ENCODE measurements at regions of chr13 and their contacts with region 1.

Region 1: GRCh38 chr13:30132623-30133553 is 174.5 kb downstream of the KATNAL1 start:
- DNase-seq: peak; percentile 78
- ATAC-seq: peak; percentile 100
- H3K4me3 ChIP-seq: no peak overlapping the region
- H3K27ac ChIP-seq: no peak overlapping the region; the same call in 1 of the 2 replicates
- H3K4me1 ChIP-seq: peaks cover 0 to 7% of the 10 kb centered on the region in 2 experiments; a peak in 2 of 4 replicates
- H3K27me3 ChIP-seq: no peaks in the 10 kb centered on the region
- CTCF ChIP-seq: peak; percentile 85 to 91 (median 88)
- POLR2A ChIP-seq: no peak
- RAD21 ChIP-seq: peak; percentile 94

Region 2: GRCh38 chr13:29771247-29771646 is 361.6 kb before region 1 on chr13:
- CTCF ChIA-PET with region 1: interaction called, 19 read pairs
- POLR2A ChIA-PET with region 1: no interaction called
- RAD21 ChIA-PET with region 1: no interaction called
- intact Hi-C with region 1: no loop called
- DNase-seq: peak; percentile 37
- ATAC-seq: 0 out of 2 replicates have a peak, but pooled peaks have one; percentile 59
- H3K4me3 ChIP-seq: no peak overlapping the region
- H3K27ac ChIP-seq: no peak overlapping the region
- H3K4me1 ChIP-seq: no peaks in the 10 kb centered on the region
- H3K27me3 ChIP-seq: no peaks in the 10 kb centered on the region
- CTCF ChIP-seq: peak; percentile 36 to 63 (median 56); a peak in 4 of 6 replicates
- POLR2A ChIP-seq: no peak
- RAD21 ChIP-seq: peak; percentile 69

Region 3: GRCh38 chr13:30026093-30026492 is 106.8 kb before region 1 on chr13:
- CTCF ChIA-PET with region 1: no interaction called
- POLR2A ChIA-PET with region 1: no interaction called
- RAD21 ChIA-PET with region 1: no interaction called
- intact Hi-C with region 1: no loop called
- DNase-seq: no peak
- ATAC-seq: no peak
- H3K4me3 ChIP-seq: no peak overlapping the region
- H3K27ac ChIP-seq: no peak overlapping the region
- H3K4me1 ChIP-seq: no peaks in the 10 kb centered on the region
- H3K27me3 ChIP-seq: no peaks in the 10 kb centered on the region
- CTCF ChIP-seq: no peak
- POLR2A ChIP-seq: no peak
- RAD21 ChIP-seq: no peak

Region 4: DNA sequence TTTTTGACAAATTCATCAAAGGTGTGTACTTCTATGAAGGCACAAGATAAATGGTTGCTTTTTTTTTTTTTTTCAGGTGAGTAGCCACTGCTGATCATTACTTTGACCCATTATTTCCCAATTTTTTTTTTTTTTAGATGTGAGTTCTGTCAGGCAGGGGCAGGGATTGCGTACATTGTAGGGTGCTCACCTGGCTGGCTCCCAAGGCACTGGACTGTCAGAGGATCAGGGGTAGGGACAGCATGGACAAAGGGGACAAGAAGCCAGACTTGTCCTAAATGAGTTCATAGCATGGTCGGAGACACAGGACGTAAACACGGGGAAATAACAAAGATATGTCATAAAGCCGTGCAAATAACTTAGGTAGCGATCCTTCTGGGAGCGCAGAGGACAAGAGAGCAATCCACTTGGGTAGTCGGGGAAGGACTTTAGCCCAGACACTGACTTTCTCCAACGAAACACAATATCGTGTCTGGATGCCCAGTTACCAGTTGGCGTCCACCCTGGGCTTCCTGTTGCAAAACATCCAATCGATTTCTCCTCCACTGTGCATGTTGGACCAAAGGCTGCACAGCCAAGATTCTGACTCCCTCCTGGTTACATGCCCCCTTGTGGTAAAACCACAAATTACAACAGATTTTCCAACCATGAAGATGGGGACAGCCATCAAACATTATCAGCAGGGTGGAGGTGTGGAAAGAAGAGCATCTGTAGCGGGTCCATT is 201.9 kb after region 1 on chr13:
- CTCF ChIA-PET with region 1: interaction called, 5 read pairs
- POLR2A ChIA-PET with region 1: no interaction called
- RAD21 ChIA-PET with region 1: no interaction called
- intact Hi-C with region 1: loop called (anchors 1 kb)
- DNase-seq: peak; percentile 59
- ATAC-seq: peak; percentile 53
- H3K4me3 ChIP-seq: no peak overlapping the region
- H3K27ac ChIP-seq: no peak overlapping the region
- H3K4me1 ChIP-seq: peaks cover 42 to 74% of the 10 kb centered on the region in 2 experiments
- H3K27me3 ChIP-seq: no peaks in the 10 kb centered on the region
- CTCF ChIP-seq: peak; percentile 24 to 79 (median 67); a peak in 5 of 6 replicates
- POLR2A ChIP-seq: no peak
- RAD21 ChIP-seq: peak; percentile 58

Region 5: GRCh38 chr13:30551189-30551588 is 418.3 kb after region 1 on chr13:
- CTCF ChIA-PET with region 1: no interaction called
- POLR2A ChIA-PET with region 1: no interaction called
- RAD21 ChIA-PET with region 1: interaction called in 1 of 2 experiments, 3 read pairs
- intact Hi-C with region 1: loop called (anchors 2 kb)
- DNase-seq: peak; percentile 26
- ATAC-seq: peak; percentile 85
- H3K4me3 ChIP-seq: no peak overlapping the region
- H3K27ac ChIP-seq: no peak overlapping the region
- H3K4me1 ChIP-seq: no peaks in the 10 kb centered on the region
- H3K27me3 ChIP-seq: no peaks in the 10 kb centered on the region
- CTCF ChIP-seq: peak; percentile 39 to 52 (median 42); a peak in 5 of 6 replicates
- POLR2A ChIP-seq: no peak
- RAD21 ChIP-seq: peak; percentile 71

Region 6: GRCh38 chr13:30673669-30674521 is 541.0 kb after region 1 on chr13:
- CTCF ChIA-PET with region 1: no interaction called
- POLR2A ChIA-PET with region 1: no interaction called
- RAD21 ChIA-PET with region 1: no interaction called
- intact Hi-C with region 1: loop called (anchors 10 kb)
- DNase-seq: peak; percentile 59
- ATAC-seq: peak; percentile 92
- H3K4me3 ChIP-seq: peak overlapping the region; percentile 13 to 44; a peak in 3 of 4 replicates
- H3K27ac ChIP-seq: peak overlapping the region; percentile 1; the same call in 1 of the 2 replicates
- H3K4me1 ChIP-seq: peaks cover 0 to 15% of the 10 kb centered on the region in 2 experiments; a peak in 2 of 4 replicates
- H3K27me3 ChIP-seq: no peaks in the 10 kb centered on the region
- CTCF ChIP-seq: peak in 2 of 3 experiments; percentile 58 to 64; a peak in 4 of 6 replicates
- POLR2A ChIP-seq: peak; percentile 37
- RAD21 ChIP-seq: no peak

Measured in HCT116 (cell line).